Activated B cell treated with CpG ODN at 0.5 μM for 24 hours (primary cell): ENCODE measurements at regions of chr3 and their contacts with region 1.

Region 1: DNA sequence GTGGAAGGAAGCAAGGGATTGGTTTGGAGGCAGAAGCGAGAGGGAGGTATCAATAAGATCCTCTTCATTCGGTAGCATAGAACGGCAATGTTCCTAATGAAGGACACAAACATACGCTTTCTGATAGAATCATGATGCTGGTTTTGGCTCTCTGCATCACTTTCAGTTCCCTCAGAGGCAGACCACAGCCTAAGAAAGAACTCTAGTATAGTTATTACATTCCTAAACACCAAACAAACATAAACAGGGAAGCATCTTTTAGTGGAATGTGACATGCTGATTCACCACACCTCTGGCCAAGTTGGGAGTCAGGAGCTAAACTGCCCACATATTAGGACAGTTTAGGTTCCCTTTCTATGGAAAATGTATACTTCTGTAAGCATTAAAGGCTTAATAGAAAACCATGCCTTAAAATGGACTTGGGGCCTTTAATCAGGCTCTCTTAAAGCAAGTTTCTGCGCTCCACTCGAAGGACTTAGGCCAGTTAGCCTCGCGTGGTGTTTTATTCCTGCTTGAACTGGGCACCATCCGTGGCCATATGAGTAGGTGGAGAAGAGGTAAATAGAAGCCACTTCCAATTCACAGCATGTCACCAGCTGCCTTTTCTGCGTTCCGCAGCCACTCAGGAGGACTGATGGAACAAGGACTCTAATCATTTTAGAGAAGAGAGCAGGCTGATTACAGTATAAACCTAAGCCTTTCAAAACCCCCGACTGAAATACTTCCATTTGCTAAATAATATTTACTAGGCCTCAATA is 53.7 kb downstream of the CD47 start:
- DNase-seq: no peak
- ATAC-seq: peak; percentile 67
- H3K4me3 Mint-ChIP-seq: peak overlapping the region; percentile 17
- H3K27ac Mint-ChIP-seq: peak overlapping the region; percentile 78
- H3K4me1 Mint-ChIP-seq: peaks cover 31% of the 10 kb centered on the region
- H3K27me3 Mint-ChIP-seq: no peaks in the 10 kb centered on the region
- CTCF ChIP-seq: no peak

Region 2: DNA sequence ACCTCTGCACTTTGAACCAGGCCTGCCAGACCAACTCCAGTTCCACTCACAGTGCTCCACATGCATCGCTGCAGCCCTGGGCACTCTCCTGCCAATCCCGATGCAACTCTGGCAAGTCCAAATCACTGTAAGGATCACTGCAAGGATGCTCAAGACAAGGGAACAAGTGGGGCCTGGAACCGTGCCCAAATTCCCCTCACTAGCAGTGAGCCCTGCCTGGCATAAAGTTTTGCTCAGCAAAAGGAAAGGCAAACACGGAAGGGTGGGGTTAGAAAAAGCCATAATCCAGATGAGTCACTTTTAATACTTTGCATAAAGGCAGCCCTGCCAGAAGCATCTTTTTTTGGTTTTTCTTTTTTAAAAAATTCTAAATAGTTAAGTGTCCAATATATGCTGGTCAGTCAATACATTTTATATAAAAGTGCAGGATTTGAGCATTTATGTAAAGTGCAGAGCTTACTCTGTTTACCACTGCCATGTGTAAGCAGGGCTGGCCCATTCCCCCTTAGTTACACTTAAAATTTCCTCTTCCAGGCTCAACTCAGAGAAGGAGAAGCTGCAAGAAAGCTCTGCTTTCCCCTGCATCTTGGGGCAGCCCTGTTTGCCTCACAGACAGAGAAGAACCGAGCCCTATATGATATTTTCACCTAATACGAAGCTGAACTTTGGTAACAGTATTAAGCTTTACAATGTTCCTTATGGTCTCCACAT is 48.5 kb before region 1 on chr3:
- CTCF ChIA-PET with region 1: no interaction called
- POLR2A ChIA-PET with region 1: no interaction called
- intact Hi-C with region 1: no loop called
- DNase-seq: no peak
- ATAC-seq: peak; percentile 35
- H3K4me3 Mint-ChIP-seq: peak overlapping the region; percentile 20
- H3K27ac Mint-ChIP-seq: no peak overlapping the region
- H3K4me1 Mint-ChIP-seq: peaks cover 24% of the 10 kb centered on the region
- H3K27me3 Mint-ChIP-seq: no peaks in the 10 kb centered on the region
- CTCF ChIP-seq: no peak

Region 3: DNA sequence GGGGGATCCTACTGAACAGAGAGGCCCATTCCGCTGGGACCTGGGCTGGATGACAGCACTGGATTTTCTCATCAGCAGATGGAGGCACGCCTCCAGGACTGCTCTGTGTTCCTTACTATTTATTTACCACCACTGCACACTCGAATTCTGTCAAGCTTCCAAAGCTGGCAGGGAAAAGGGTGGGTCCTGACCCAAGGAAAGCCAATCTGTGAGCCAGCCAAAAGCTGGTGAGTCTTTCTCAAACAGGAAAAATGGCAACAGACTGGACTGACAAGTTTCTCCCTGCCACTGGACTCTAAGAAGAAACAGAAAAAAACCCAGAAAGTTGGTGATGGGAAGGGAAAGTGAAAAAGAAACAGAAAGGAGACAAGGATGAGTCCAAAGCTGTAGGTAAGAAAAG is 15.9 kb after region 1 on chr3:
- CTCF ChIA-PET with region 1: interaction called, 3 read pairs
- POLR2A ChIA-PET with region 1: no interaction called
- intact Hi-C with region 1: loop called (anchors 2 kb)
- DNase-seq: no peak
- ATAC-seq: no peak
- H3K4me3 Mint-ChIP-seq: no peak overlapping the region
- H3K27ac Mint-ChIP-seq: peak overlapping the region; percentile 59
- H3K4me1 Mint-ChIP-seq: peaks cover 40% of the 10 kb centered on the region
- H3K27me3 Mint-ChIP-seq: no peaks in the 10 kb centered on the region
- CTCF ChIP-seq: no peak